GM13977 (cell line): ENCODE measurements at regions of chr2 and their contacts with region 1.

Region 1: DNA sequence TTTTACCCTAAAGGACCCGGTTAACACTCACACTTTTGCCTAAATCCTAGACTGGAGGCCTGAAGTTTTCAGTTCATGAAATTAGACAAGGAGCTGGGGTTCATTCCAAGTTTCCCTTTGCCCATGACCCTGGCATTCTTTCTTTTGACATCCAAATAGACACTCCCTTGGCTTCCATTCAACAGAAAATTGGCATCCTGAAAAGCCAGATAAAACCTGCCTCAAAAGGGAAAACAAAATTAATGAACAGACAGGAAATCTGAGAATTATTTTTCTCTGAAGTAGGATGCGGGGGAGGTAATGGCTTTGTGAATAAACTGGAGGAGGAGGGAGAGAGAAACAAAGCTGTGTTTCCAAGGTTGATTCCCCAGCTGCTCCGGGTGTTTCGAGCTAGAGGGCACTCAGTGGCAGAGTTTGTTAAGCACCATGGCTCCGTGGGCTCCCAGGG is 41.0 kb downstream of the SPP2 start:
- DNase-seq: no peak
- CTCF ChIP-seq: no peak

Region 2: GRCh38 chr2:233976690-233977294 is 114.7 kb before region 1 on chr2:
- in situ Hi-C with region 1: loop called (anchors 25 kb)
- DNase-seq: peak; percentile 44
- CTCF ChIP-seq: peak; percentile 35